ENCODE measurements at regions of chr3 and their contacts with region 1.

Region 1: GRCh38 chr3:48918388-48919214 is at the start of gene ARIH2:
- DNase-seq: peak; percentile 84 to 99 (median 93)

Region 2: DNA sequence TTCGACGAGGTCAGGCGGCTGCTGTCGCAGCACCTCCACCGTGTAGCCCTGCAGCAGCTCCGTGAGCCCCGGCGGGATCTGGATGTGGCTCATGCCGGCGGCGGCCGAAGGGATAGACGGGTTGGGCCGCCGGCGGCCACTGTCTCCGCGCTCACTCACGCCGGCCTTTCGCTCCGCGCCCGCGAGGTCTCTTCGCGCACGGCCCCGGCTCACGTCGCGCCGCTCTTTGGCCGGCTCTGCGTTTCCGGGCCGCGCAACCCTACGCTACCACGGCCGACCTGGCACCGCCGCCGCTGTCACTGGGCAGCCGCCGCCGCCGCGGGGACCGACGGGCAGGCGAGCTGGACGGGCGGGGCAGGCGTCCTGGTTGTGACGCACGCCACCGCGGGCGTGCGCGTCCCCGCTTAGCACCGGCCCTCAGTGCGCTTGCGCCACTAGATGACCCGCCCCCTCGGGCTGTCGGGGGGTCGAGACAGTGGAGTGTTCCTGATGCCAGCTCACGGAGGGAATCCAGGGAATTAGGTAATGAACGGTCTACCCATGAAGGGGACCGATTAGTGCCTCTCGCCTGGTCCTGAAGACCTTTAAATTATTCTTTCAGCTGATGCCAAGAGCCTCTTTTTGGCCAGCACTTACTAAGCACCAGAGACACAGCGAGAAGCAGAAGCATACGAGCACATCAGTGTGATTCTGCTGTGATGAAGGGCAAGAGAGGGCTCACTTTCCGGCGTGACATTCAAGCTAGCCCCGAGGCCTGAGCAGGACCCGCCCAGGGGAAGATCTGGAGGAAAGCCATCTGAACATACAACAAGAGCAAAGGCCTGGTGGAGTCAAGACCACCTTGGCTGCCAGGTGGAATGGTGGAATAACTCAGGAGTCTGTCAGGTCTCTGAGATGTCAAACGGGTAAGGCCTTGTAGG is 70.8 kb before region 1 on chr3 and contains the start of gene PRKAR2A:
- intact Hi-C with region 1: loop called (anchors 1 kb)
- DNase-seq: peak; percentile 83 to 98 (median 88)

Region 3: DNA sequence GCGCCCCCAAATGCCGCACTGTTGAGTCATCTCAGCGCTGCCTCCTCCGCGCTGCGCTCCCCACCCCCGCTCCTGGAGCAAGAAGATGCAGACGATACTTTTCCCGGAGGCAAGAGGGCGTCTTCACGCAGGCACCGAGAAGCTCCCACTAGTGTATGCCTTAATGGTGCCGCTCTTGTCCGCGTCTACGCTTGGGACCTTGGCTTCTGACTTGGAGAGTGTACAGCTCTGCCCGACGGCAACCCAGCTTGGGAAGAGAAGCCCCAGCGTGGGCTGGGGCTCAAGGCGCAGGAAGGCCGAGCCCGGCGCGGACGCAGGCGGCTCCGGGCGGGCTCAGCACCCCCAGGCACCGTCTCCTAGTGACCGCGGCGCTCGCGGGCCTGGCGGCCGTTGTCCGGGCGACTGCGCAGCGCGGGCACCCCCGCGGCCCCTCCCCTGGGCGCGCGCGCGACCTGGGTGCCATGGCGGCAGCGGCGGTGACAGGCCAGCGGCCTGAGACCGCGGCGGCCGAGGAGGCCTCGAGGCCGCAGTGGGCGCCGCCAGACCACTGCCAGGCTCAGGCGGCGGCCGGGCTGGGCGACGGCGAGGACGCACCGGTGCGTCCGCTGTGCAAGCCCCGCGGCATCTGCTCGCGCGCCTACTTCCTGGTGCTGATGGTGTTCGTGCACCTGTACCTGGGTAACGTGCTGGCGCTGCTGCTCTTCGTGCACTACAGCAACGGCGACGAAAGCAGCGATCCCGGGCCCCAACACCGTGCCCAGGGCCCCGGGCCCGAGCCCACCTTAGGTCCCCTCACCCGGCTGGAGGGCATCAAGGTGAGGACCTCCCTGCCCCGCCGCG is 71.4 kb after region 1 on chr3 and contains the start of gene P4HTM:
- intact Hi-C with region 1: loop called (anchors 2 kb)
- DNase-seq: peak; percentile 75 to 99 (median 90)

Measured in posterior cingulate gyrus (tissue), 11 donors.